ENCODE measurements at regions of chr18 and their contacts with region 1.

Region 1: GRCh38 chr18:63273222-63273927 is 46.2 kb downstream of the BCL2 start:
- DNase-seq: peak; percentile 54
- ATAC-seq: peak; percentile 51
- H3K4me3 ChIP-seq: peak overlapping the region in 1 of 5 experiments; percentile 16
- H3K4me3 Mint-ChIP-seq: peak overlapping the region; percentile 58
- H3K27ac ChIP-seq: peak overlapping the region; percentile 34 to 61
- H3K27ac Mint-ChIP-seq: peak overlapping the region; percentile 62
- H3K4me1 ChIP-seq: peaks cover 46% of the 10 kb centered on the region in 2 donors
- H3K4me1 Mint-ChIP-seq: peaks cover 71% of the 10 kb centered on the region
- H3K27me3 ChIP-seq: no peaks in the 10 kb centered on the region
- H3K27me3 Mint-ChIP-seq: no peaks in the 10 kb centered on the region
- CTCF ChIP-seq: no peak

Region 2: GRCh38 chr18:63284827-63285733 is 11.7 kb after region 1 on chr18:
- CTCF ChIA-PET with region 1: interaction called, 4 read pairs
- POLR2A ChIA-PET with region 1: interaction called, 5 read pairs
- intact Hi-C with region 1: loop called (anchors 1 kb)
- DNase-seq: peak; percentile 82
- ATAC-seq: peak; percentile 95
- H3K4me3 ChIP-seq: peak overlapping the region in 4 of 5 experiments; percentile 15 to 51 (median 32)
- H3K4me3 Mint-ChIP-seq: no peak overlapping the region
- H3K27ac ChIP-seq: peak overlapping the region; percentile 93 to 95
- H3K27ac Mint-ChIP-seq: no peak overlapping the region
- H3K4me1 ChIP-seq: peaks cover 69 to 73% of the 10 kb centered on the region in 2 donors
- H3K4me1 Mint-ChIP-seq: peaks cover 24% of the 10 kb centered on the region
- H3K27me3 ChIP-seq: no peaks in the 10 kb centered on the region
- H3K27me3 Mint-ChIP-seq: no peaks in the 10 kb centered on the region
- CTCF ChIP-seq: no peak

Region 3: DNA sequence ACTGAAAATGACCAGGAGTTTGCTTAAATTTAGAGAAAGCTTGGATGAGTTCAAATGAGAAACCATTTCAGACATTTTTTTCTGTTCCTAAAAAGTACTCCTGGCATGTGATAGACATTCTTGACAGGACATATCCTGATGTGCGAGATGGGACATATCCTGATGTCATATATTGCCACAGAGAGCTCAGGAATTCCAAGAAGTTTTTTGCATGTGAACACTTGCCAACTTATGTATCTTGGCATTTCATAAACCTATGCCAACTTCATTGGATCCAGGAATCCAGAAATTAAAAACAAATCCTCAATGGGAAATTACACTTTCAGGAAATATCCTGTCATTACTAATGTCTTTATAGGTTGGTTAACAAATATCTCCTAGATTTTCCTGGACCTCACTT is 391.2 kb after region 1 on chr18:
- CTCF ChIA-PET with region 1: no interaction called
- POLR2A ChIA-PET with region 1: no interaction called
- intact Hi-C with region 1: no loop called
- DNase-seq: no peak
- ATAC-seq: no peak
- H3K4me3 ChIP-seq: no peak overlapping the region
- H3K4me3 Mint-ChIP-seq: no peak overlapping the region
- H3K27ac ChIP-seq: no peak overlapping the region
- H3K27ac Mint-ChIP-seq: no peak overlapping the region
- H3K4me1 ChIP-seq: no peaks in the 10 kb centered on the region
- H3K4me1 Mint-ChIP-seq: no peaks in the 10 kb centered on the region
- H3K27me3 ChIP-seq: no peaks in the 10 kb centered on the region
- H3K27me3 Mint-ChIP-seq: peaks cover 5% of the 10 kb centered on the region
- CTCF ChIP-seq: no peak